GM12878 (cell line): ENCODE measurements at regions of chr22 and their contacts with region 1.

Region 1: DNA sequence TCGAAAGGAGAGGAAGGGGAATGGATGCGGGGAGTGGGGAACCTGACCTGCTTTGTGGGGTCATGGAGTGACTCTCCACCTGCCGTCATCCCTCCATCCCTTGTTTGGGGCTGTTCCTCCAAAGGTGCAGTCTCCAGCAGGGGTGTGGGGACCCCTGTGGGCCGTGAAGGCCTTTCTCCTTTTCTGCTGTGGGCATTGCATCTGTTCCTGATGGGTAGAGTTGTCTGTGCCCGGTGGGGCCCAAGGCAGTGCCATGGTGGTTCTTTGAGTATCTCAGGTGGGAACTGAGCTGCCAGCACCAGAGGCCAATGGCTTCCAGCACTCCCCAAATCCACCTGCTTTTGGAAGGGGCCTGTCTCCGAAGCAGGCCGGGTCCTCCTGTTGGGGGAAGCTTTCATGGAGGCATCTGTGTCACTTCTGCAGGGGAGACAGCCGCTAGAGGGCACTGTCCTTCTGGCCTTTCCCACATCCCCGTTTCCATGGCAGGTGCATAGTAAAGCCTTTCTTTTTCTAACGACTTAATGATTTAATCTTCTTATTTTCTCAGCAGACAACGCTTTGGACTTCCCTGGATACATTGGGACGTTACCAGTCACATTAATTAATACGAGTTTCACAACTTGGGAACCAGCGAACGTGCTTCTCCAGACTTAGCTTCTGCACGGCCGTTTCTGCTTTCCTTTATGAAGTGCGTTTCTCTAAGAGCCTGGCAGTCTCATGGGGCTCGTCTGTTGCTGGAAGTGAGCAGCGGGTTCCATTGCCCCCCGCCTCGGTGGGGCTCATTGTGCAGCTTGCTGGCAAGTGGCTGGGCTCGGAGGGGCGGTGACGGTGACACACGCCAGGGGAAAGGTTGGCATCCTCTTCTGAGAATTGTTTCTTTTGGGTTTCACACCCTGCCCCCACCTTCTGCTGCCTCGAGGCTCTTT is 57.1 kb downstream of the PARVB start:
- DNase-seq: no peak
- ATAC-seq: peak; percentile 84
- H3K4me3 ChIP-seq: no peak overlapping the region
- H3K27ac ChIP-seq: no peak overlapping the region
- H3K4me1 ChIP-seq: no peaks in the 10 kb centered on the region
- H3K27me3 ChIP-seq: no peaks in the 10 kb centered on the region
- CTCF ChIP-seq: peak; percentile 77 to 91 (median 82)
- EP300 ChIP-seq: no peak
- POLR2A ChIP-seq: no peak
- RAD21 ChIP-seq: peak; percentile 53

Region 2: DNA sequence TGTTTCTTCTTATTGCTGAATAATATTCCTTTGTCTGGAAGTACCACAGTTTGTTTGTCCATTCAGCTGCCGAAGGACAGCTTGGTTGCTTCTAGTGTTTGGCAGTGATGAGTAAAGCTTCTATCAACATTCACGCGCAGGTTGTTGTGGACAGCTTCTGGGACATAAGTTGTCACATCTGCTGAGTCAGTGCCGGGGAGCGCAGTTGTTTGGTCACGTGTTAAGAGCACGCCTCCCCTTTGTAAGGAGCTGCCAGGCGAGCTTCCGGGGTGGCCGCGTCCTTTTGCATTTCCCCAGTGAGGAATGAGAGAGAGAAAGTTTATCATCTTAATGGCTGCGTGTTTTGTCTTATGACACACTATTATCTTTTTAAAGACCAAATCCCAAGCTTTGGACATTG is 95.7 kb before region 1 on chr22:
- CTCF ChIA-PET with region 1: interaction called, 499 read pairs
- POLR2A ChIA-PET with region 1: no interaction called
- RAD21 ChIA-PET with region 1: interaction called, 185 read pairs
- SMC1A ChIA-PET with region 1: interaction called, 22 read pairs
- in situ Hi-C with region 1: no loop called
- intact Hi-C with region 1: no loop called
- DNase-seq: no peak
- ATAC-seq: no peak
- H3K4me3 ChIP-seq: no peak overlapping the region
- H3K27ac ChIP-seq: no peak overlapping the region
- H3K4me1 ChIP-seq: no peaks in the 10 kb centered on the region
- H3K27me3 ChIP-seq: no peaks in the 10 kb centered on the region
- CTCF ChIP-seq: no peak
- EP300 ChIP-seq: no peak
- POLR2A ChIP-seq: no peak
- RAD21 ChIP-seq: no peak

Region 3: GRCh38 chr22:43998679-43999264 is 82.4 kb before region 1 on chr22:
- CTCF ChIA-PET with region 1: interaction called, 499 read pairs
- POLR2A ChIA-PET with region 1: interaction called, 10 read pairs
- RAD21 ChIA-PET with region 1: interaction called, 185 read pairs
- SMC1A ChIA-PET with region 1: interaction called, 282 read pairs
- in situ Hi-C with region 1: loop called (anchors 5 kb)
- intact Hi-C with region 1: loop called (anchors 1 kb)
- DNase-seq: no peak
- ATAC-seq: no peak
- H3K4me3 ChIP-seq: no peak overlapping the region
- H3K27ac ChIP-seq: no peak overlapping the region
- H3K4me1 ChIP-seq: peaks cover 15% of the 10 kb centered on the region
- H3K27me3 ChIP-seq: no peaks in the 10 kb centered on the region
- CTCF ChIP-seq: no peak
- EP300 ChIP-seq: no peak
- POLR2A ChIP-seq: no peak
- RAD21 ChIP-seq: no peak

Region 4: GRCh38 chr22:44026630-44027511 is 54.3 kb before region 1 on chr22:
- CTCF ChIA-PET with region 1: interaction called, 15 read pairs
- POLR2A ChIA-PET with region 1: interaction called, 7 read pairs
- RAD21 ChIA-PET with region 1: interaction called, 10 read pairs
- SMC1A ChIA-PET with region 1: interaction called, 16 read pairs
- in situ Hi-C with region 1: no loop called
- intact Hi-C with region 1: loop called (anchors 5 kb)
- DNase-seq: peak; percentile 89
- ATAC-seq: peak; percentile 65
- H3K4me3 ChIP-seq: peak overlapping the region; percentile 78
- H3K27ac ChIP-seq: peak overlapping the region; percentile 100
- H3K4me1 ChIP-seq: peaks cover 25% of the 10 kb centered on the region
- H3K27me3 ChIP-seq: no peaks in the 10 kb centered on the region
- CTCF ChIP-seq: no peak
- EP300 ChIP-seq: peak; percentile 90 to 93
- POLR2A ChIP-seq: peak; percentile 82
- RAD21 ChIP-seq: no peak

Region 5: GRCh38 chr22:44068422-44069191 is 12.6 kb before region 1 on chr22:
- CTCF ChIA-PET with region 1: interaction called, 40 read pairs
- POLR2A ChIA-PET with region 1: no interaction called
- RAD21 ChIA-PET with region 1: interaction called, 26 read pairs
- SMC1A ChIA-PET with region 1: interaction called, 14 read pairs
- in situ Hi-C with region 1: no loop called
- intact Hi-C with region 1: no loop called
- DNase-seq: peak; percentile 56
- ATAC-seq: peak; percentile 84
- H3K4me3 ChIP-seq: peak overlapping the region; percentile 18; the same call in 1 of the 2 replicates
- H3K27ac ChIP-seq: peak overlapping the region; percentile 78
- H3K4me1 ChIP-seq: peaks cover 39% of the 10 kb centered on the region
- H3K27me3 ChIP-seq: no peaks in the 10 kb centered on the region
- CTCF ChIP-seq: peak; percentile 4 to 21 (median 6); a peak in 2 of 6 replicates
- EP300 ChIP-seq: 0 out of 4 replicates have a peak, but pooled peaks of 1 of the 2 experiments have one; percentile 5
- POLR2A ChIP-seq: no peak
- RAD21 ChIP-seq: no peak

Region 6: GRCh38 chr22:44133901-44134571 is 52.8 kb after region 1 on chr22:
- CTCF ChIA-PET with region 1: no interaction called
- POLR2A ChIA-PET with region 1: no interaction called
- RAD21 ChIA-PET with region 1: no interaction called
- SMC1A ChIA-PET with region 1: no interaction called
- in situ Hi-C with region 1: no loop called
- intact Hi-C with region 1: no loop called
- DNase-seq: no peak
- ATAC-seq: no peak
- H3K4me3 ChIP-seq: no peak overlapping the region
- H3K27ac ChIP-seq: no peak overlapping the region
- H3K4me1 ChIP-seq: no peaks in the 10 kb centered on the region
- H3K27me3 ChIP-seq: no peaks in the 10 kb centered on the region
- CTCF ChIP-seq: no peak
- EP300 ChIP-seq: no peak
- POLR2A ChIP-seq: no peak
- RAD21 ChIP-seq: no peak

Region 7: GRCh38 chr22:44567846-44568493 is 486.8 kb after region 1 on chr22:
- CTCF ChIA-PET with region 1: interaction called, 6 read pairs
- POLR2A ChIA-PET with region 1: no interaction called
- RAD21 ChIA-PET with region 1: no interaction called
- SMC1A ChIA-PET with region 1: interaction called, 3 read pairs
- in situ Hi-C with region 1: no loop called
- intact Hi-C with region 1: loop called (anchors 10 kb)
- DNase-seq: no peak
- ATAC-seq: no peak
- H3K4me3 ChIP-seq: no peak overlapping the region
- H3K27ac ChIP-seq: no peak overlapping the region
- H3K4me1 ChIP-seq: no peaks in the 10 kb centered on the region
- H3K27me3 ChIP-seq: peaks cover 0 to 5% of the 10 kb centered on the region in 2 experiments; a peak in 2 of 4 replicates
- CTCF ChIP-seq: peak; percentile 37 to 60 (median 47)
- EP300 ChIP-seq: no peak
- POLR2A ChIP-seq: no peak
- RAD21 ChIP-seq: peak; percentile 56